Activated naive CD8-positive, alpha-beta T cell treated with anti-CD3 and anti-CD28 coated beads, Interleukin-2, amount 10 ng/mL, durations not matched to agents 7 days and 5 days (primary cell): ENCODE measurements at regions of chr10 and their contacts with region 1.

Region 1: DNA sequence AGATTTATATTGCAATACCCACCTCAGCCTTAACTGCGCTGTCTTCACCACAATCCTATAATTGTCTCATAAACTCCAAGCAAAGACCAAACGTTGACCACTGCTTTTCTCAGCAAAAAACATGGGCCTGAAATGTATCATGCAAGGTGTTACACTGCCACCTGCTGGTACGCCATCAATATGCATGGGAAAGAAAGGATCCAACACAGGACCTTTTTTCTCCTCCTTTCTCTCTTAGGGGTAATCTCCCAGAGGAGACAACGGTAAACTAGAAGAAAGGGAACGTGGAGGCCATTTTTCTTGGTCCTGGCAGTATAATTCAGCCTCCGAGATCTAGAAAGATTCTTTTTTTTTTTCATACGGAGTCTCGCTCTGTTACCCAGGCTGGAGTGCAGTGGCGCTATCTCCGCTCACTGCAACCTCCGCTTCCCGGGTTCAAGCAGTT is 79.1 kb upstream of the MPP7 start:
- DNase-seq: peak; percentile 73
- ATAC-seq: peak; percentile 94
- H3K4me3 Mint-ChIP-seq: peak overlapping the region; percentile 17
- H3K27ac Mint-ChIP-seq: no peak overlapping the region
- H3K4me1 Mint-ChIP-seq: peaks cover 27% of the 10 kb centered on the region
- H3K27me3 Mint-ChIP-seq: peaks cover 8% of the 10 kb centered on the region

Region 2: GRCh38 chr10:28263136-28263820 is 118.6 kb before region 1 on chr10:
- POLR2A ChIA-PET with region 1: no interaction called
- DNase-seq: no peak
- ATAC-seq: no peak
- H3K4me3 Mint-ChIP-seq: no peak overlapping the region
- H3K27ac Mint-ChIP-seq: no peak overlapping the region
- H3K4me1 Mint-ChIP-seq: peaks cover 11% of the 10 kb centered on the region
- H3K27me3 Mint-ChIP-seq: no peaks in the 10 kb centered on the region

Region 3: DNA sequence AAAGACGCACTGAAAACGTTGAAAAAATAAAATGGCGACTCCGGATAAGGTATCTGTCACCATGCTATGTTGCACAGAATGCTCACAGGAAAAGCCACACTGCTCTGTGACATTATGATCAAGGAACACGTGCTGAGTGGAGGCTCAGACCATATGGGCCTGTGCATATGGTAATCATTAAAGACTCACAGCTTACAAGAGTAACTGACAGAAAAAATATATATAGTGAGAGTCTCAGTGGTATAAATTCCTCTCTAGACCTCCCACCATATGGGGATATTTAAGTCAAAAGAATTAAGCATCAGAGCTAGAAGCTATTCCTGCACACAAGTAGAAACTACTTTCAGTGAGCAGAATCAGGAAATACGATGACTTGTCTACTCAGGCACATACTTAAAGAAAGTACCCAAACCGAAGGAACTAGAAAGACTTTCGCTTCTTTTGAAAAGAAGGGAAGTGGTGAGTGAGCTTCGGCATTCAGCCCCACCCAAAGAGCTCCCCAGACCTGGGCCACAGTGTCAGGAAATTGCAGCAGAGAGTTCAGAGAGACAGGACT is 13.9 kb before region 1 on chr10:
- POLR2A ChIA-PET with region 1: interaction called, 25 read pairs
- DNase-seq: peak; percentile 51
- ATAC-seq: peak; percentile 94
- H3K4me3 Mint-ChIP-seq: peak overlapping the region; percentile 81
- H3K27ac Mint-ChIP-seq: peak overlapping the region; percentile 98
- H3K4me1 Mint-ChIP-seq: peaks cover 40% of the 10 kb centered on the region
- H3K27me3 Mint-ChIP-seq: no peaks in the 10 kb centered on the region